K562 (cell line): ENCODE measurements at regions of chr2 and their contacts with region 1.

Region 1: DNA sequence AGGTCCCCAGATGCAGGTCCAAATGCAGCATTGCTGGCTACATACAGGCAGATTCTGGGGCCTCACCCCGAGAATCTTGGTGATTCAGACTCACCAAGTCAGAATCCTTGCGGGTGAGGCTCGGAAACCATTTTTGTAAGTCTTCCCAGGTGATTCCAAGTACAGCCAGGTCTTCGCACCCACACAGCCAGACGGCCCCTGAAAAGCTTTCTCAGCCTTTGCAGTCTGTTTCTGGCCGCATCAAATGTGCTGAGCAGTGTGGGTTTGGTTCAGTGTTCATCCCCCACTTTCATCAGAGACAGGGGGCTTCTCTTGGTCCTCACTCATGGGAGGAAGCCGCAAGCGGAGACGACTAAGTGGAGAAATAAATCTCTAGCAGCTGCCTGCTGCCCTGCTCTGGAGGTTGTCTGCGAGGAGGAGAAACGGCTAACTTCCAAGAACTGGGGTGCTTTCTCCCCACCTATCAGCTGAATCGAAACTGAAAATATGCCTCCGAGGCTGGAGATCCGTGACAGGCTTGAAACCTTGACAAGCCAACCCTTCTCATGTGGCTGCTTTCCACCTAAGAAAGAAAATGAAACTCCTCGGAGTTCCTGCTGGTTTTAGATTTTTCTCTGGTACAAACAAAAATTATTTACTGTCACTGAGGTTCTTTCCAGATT is 8.9 kb upstream of the TMEM185B start:
- DNase-seq: peak in 2 of 4 experiments; percentile 41 to 52
- ATAC-seq: peak; percentile 54
- H3K4me3 ChIP-seq: peak overlapping the region; percentile 14
- H3K27ac ChIP-seq: peak overlapping the region; percentile 5; the same call in 2 of the 3 replicates
- H3K4me1 ChIP-seq: peaks cover 13 to 14% of the 10 kb centered on the region in 2 experiments; a peak in 4 of 5 replicates
- H3K27me3 ChIP-seq: no peaks in the 10 kb centered on the region
- CTCF ChIP-seq: no peak
- EP300 ChIP-seq: no peak
- POLR2A ChIP-seq: no peak
- RAD21 ChIP-seq: no peak

Region 2: GRCh38 chr2:120246546-120247300 is 14.6 kb after region 1 on chr2:
- CTCF ChIA-PET with region 1: no interaction called
- POLR2A ChIA-PET with region 1: interaction called, 10 read pairs
- in situ Hi-C with region 1: no loop called
- intact Hi-C with region 1: no loop called
- DNase-seq: no peak
- ATAC-seq: no peak
- H3K4me3 ChIP-seq: no peak overlapping the region
- H3K27ac ChIP-seq: no peak overlapping the region
- H3K4me1 ChIP-seq: peaks cover 10 to 16% of the 10 kb centered on the region in 2 experiments
- H3K27me3 ChIP-seq: peaks cover 0 to 6% of the 10 kb centered on the region in 2 experiments; a peak in 3 of 5 replicates
- CTCF ChIP-seq: no peak
- EP300 ChIP-seq: no peak
- POLR2A ChIP-seq: no peak
- RAD21 ChIP-seq: no peak

Region 3: GRCh38 chr2:120703330-120703994 is 471.4 kb after region 1 on chr2:
- CTCF ChIA-PET with region 1: no interaction called
- POLR2A ChIA-PET with region 1: no interaction called
- in situ Hi-C with region 1: no loop called
- intact Hi-C with region 1: no loop called
- DNase-seq: no peak
- ATAC-seq: no peak
- H3K4me3 ChIP-seq: no peak overlapping the region
- H3K27ac ChIP-seq: no peak overlapping the region
- H3K4me1 ChIP-seq: no peaks in the 10 kb centered on the region; a peak in 1 of 5 replicates
- H3K27me3 ChIP-seq: peaks cover 13 to 44% of the 10 kb centered on the region in 2 experiments; a peak in 4 of 5 replicates
- CTCF ChIP-seq: no peak
- EP300 ChIP-seq: no peak
- POLR2A ChIP-seq: no peak
- RAD21 ChIP-seq: no peak